Posterior vena cava (tissue), 2 donors: ENCODE measurements at regions of chr4 and their contacts with region 1.

Region 1: GRCh38 chr4:87881115-87881514 is 48.3 kb downstream of the MEPE start:
- DNase-seq: no peak

Region 2: GRCh38 chr4:87943660-87944149 is 62.6 kb after region 1 on chr4:
- intact Hi-C with region 1: loop called in 1 of 2 experiments (anchors 2 kb)
- DNase-seq: no peak